Left colon (tissue), 2 donors: ENCODE measurements at regions of chr1 and their contacts with region 1.

Region 1: DNA sequence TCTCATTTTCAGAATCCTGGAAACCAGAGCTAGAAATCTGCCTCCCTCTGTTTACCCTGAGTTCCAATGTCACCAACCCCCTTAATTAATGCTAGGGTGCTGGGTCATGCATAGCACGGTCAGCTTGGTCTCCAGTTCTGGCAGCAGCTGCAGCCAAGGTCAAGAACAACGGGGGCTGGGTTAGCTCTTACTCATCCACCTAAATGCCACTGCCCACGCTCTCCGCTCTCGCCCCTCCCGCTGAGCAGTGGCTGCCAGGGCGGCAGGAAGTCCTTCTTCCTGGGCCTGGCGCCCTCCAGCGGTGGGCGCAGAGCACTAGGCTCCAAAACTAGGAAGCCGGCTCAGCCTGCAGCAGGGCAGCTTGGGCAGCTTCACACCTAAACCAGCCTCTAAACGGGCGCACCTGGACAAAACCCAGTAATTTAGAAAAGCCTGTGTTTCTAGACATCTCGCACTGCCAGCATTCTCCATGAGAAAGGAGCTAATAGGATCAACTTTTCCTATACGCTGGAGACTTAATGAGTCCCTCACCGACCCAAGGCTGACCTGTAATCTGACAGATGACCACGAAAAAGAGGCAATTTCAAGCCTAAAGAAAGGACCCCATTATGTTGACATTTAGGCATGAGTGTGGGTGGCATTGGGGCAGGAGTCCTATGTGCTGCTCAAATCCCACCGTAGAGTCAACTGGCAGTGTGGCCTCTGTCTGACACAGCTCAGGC is 78.3 kb upstream of the LRRN2 start:
- DNase-seq: peak; percentile 62 to 82
- ATAC-seq: peak; percentile 99

Region 2: GRCh38 chr1:204565617-204566582 is 198.0 kb before region 1 on chr1:
- intact Hi-C with region 1: loop called in 1 of 2 experiments (anchors 5 kb)
- DNase-seq: peak; percentile 37 to 52
- ATAC-seq: peak; percentile 76

Region 3: GRCh38 chr1:204607910-204608309 is 156.0 kb before region 1 on chr1:
- intact Hi-C with region 1: no loop called
- DNase-seq: no peak
- ATAC-seq: no peak